ENCODE measurements at regions of chr10 and their contacts with region 1.

Region 1: GRCh38 chr10:13586676-13587355 is at the start of gene PRPF18:
- DNase-seq: peak; percentile 92 to 97 (median 95)
- ATAC-seq: peak; percentile 99
- H3K4me3 ChIP-seq: peak within 1 kb of the TSS; percentile 97
- H3K4me3 Mint-ChIP-seq: peak within 1 kb of the TSS; percentile 100
- H3K27ac ChIP-seq: peak within 1 kb of the TSS; percentile 69 to 73
- H3K27ac Mint-ChIP-seq: peak within 1 kb of the TSS; percentile 99
- H3K4me1 ChIP-seq: peaks cover 16% of the 10 kb centered on the region
- H3K4me1 Mint-ChIP-seq: peaks cover 41% of the 10 kb centered on the region
- H3K27me3 ChIP-seq: peaks cover 3 to 4% of the 10 kb centered on the region in 2 experiments
- H3K27me3 Mint-ChIP-seq: peaks cover 18% of the 10 kb centered on the region
- CTCF ChIP-seq: peak; percentile 96
- total RNA-seq, gene PRPF18: 29.4 to 29.6 TPM

Region 2: DNA sequence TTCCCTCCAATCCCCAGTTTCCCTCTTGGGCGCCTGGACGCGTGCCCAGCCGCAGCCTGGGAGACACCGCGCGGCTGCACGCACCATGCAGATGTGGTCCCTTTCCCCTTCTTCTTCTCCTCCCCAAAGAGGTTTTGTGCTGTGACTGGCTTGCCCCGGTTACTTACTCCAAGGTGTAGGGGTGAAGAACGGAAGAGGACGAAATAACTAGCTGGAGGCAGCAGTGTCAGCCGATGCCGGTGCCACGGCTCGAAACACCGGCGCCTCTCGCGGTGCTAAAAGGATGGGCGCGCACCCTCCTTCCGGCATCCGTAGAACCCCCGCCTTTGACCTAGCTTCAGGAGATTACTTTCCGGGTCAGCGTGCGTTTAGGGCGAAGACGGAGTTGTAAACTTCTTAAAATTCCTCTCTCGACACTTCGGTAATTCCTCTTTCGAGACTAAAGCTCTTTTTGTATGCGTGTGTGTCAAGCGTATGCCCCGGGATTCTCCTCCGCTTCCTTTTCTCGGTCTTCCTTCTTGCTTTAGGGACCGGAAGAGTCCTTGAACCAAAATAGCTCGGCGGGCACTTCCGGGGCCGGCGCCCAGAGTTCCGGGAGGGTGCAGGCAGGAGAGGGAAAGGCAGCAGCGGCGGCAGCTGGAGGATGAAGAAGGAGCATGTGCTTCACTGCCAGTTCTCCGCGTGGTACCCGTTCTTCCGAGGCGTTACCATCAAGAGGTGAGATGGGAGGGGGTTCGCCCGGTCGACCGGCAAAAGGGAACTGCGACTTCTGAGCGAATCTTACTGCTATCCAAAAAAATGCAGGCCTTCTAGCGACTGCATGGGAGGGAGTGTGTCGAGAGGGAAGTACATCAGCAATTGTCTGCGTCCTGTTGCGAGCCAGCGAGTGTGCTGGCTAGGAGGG is 1391.0 kb before region 1 on chr10 and contains the starts of genes CDC123 and NUDT5:
- CTCF ChIA-PET with region 1: no interaction called
- POLR2A ChIA-PET with region 1: no interaction called
- intact Hi-C with region 1: loop called (anchors 5 to 10 kb)
- DNase-seq: peak; percentile 62 to 92 (median 84)
- ATAC-seq: peak; percentile 92
- H3K4me3 ChIP-seq: peak within 1 kb of the TSS; percentile 77 to 82
- H3K4me3 Mint-ChIP-seq: peak within 1 kb of the TSS; percentile 98
- H3K27ac ChIP-seq: peak within 1 kb of the TSS; percentile 82 to 98
- H3K27ac Mint-ChIP-seq: peak within 1 kb of the TSS; percentile 99
- H3K4me1 ChIP-seq: peaks cover 24% of the 10 kb centered on the region
- H3K4me1 Mint-ChIP-seq: peaks cover 62% of the 10 kb centered on the region
- H3K27me3 ChIP-seq: no peaks in the 10 kb centered on the region
- H3K27me3 Mint-ChIP-seq: no peaks in the 10 kb centered on the region
- CTCF ChIP-seq: no peak
- total RNA-seq, gene CDC123: 45.3 to 55.0 TPM
- total RNA-seq, gene NUDT5: 12.1 to 13.6 TPM

Region 3: GRCh38 chr10:13160934-13161856 is 425.6 kb before region 1 on chr10 and contains the start of gene MCM10:
- CTCF ChIA-PET with region 1: no interaction called
- POLR2A ChIA-PET with region 1: no interaction called
- intact Hi-C with region 1: loop called (anchors 1 to 5 kb)
- DNase-seq: peak; percentile 93 to 99 (median 98)
- ATAC-seq: peak; percentile 100
- H3K4me3 ChIP-seq: peak within 1 kb of the TSS; percentile 44 to 49
- H3K4me3 Mint-ChIP-seq: peak within 1 kb of the TSS; percentile 88
- H3K27ac ChIP-seq: peak within 1 kb of the TSS in 1 of 2 experiments; percentile 40
- H3K27ac Mint-ChIP-seq: peak within 1 kb of the TSS; percentile 86
- H3K4me1 ChIP-seq: peaks cover 10% of the 10 kb centered on the region
- H3K4me1 Mint-ChIP-seq: peaks cover 14% of the 10 kb centered on the region
- H3K27me3 ChIP-seq: no peaks in the 10 kb centered on the region
- H3K27me3 Mint-ChIP-seq: no peaks in the 10 kb centered on the region
- CTCF ChIP-seq: peak; percentile 96
- total RNA-seq, gene MCM10: 0.08 to 0.19 TPM

Region 4: DNA sequence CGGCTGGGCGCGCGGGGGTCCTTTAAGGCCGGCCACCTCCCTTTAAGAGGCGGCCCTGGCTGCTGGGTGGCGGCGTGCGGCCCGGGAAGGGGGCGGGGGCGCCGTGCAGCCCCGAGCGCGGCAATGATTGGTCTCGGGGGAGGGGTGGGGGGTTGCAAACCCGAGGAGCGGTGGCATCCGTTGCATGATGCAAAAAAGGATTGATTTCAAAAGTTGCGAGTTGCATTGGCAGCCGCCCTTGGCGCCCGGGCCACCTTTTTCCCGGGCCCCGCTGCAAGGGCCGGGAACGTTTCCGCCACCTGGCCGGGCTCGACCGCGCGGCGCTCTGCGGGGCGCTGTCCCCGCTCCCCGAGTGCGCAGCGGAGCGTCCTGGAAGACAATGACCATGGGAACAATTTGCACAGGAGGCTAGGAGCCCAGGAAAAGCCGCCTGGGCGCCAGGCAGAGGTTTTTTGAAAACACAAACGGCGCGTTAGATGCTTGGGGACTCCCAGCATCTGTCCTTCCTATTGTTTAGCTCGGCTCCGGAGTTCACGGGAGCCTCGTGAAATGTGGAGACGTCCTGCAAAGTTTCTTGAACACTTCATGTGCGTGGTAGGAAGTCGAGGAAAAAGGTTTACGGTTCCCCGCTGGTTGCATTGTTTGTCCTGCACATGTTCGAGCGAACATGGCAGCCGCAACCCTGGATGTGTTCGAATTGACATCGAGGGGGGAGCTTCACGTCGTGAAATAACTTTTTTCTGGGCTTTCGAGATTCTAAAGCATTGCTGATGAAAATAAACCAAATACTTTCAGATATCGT is 238.4 kb before region 1 on chr10 and contains the start of gene SEPHS1:
- CTCF ChIA-PET with region 1: interaction called, 4 read pairs
- POLR2A ChIA-PET with region 1: interaction called, 5 read pairs
- intact Hi-C with region 1: loop called (anchors 1 kb)
- DNase-seq: peak; percentile 51 to 89 (median 79)
- ATAC-seq: peak; percentile 67
- H3K4me3 ChIP-seq: peak within 1 kb of the TSS; percentile 83 to 93
- H3K4me3 Mint-ChIP-seq: peak within 1 kb of the TSS; percentile 96
- H3K27ac ChIP-seq: peak within 1 kb of the TSS; percentile 65 to 82
- H3K27ac Mint-ChIP-seq: peak within 1 kb of the TSS; percentile 94
- H3K4me1 ChIP-seq: peaks cover 48% of the 10 kb centered on the region
- H3K4me1 Mint-ChIP-seq: peaks cover 61% of the 10 kb centered on the region
- H3K27me3 ChIP-seq: no peaks in the 10 kb centered on the region
- H3K27me3 Mint-ChIP-seq: no peaks in the 10 kb centered on the region
- CTCF ChIP-seq: no peak
- total RNA-seq, gene SEPHS1: 16.9 to 19.2 TPM

Region 5: GRCh38 chr10:13659897-13660550 is 73.2 kb after region 1 on chr10:
- CTCF ChIA-PET with region 1: no interaction called
- POLR2A ChIA-PET with region 1: no interaction called
- intact Hi-C with region 1: no loop called
- DNase-seq: peak; percentile 43 to 77 (median 69)
- ATAC-seq: peak; percentile 79
- H3K4me3 ChIP-seq: no peak overlapping the region
- H3K4me3 Mint-ChIP-seq: peak overlapping the region; percentile 4
- H3K27ac ChIP-seq: no peak overlapping the region
- H3K27ac Mint-ChIP-seq: no peak overlapping the region
- H3K4me1 ChIP-seq: peaks cover 16% of the 10 kb centered on the region
- H3K4me1 Mint-ChIP-seq: peaks cover 24% of the 10 kb centered on the region
- H3K27me3 ChIP-seq: no peaks in the 10 kb centered on the region
- H3K27me3 Mint-ChIP-seq: no peaks in the 10 kb centered on the region
- CTCF ChIP-seq: peak; percentile 94

Region 6: DNA sequence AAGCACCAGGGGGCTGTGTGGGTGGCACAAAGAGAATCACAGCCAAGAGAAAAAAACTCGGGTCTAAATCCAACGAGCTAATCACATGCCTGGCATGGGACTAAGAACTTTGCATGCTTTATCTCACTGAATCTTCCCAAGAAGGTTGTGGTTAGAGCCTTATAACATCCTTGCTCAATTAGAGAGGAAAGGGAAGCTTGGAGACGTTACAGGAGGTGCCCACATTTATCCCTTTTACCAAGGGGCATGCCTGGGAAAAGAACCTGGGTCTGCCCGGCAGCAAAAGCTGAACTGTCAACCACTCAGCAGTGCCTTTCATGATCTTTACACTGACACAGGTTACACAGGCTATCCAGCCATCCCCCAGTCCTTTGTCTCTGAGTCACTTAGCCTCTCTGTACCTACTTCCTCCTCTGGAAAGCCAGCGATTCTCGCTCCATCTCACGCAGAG is 190.1 kb after region 1 on chr10:
- CTCF ChIA-PET with region 1: no interaction called
- POLR2A ChIA-PET with region 1: no interaction called
- intact Hi-C with region 1: loop called (anchors 2 to 5 kb)
- DNase-seq: no peak
- ATAC-seq: no peak
- H3K4me3 ChIP-seq: no peak overlapping the region
- H3K4me3 Mint-ChIP-seq: no peak overlapping the region
- H3K27ac ChIP-seq: no peak overlapping the region
- H3K27ac Mint-ChIP-seq: no peak overlapping the region
- H3K4me1 ChIP-seq: peaks cover 4% of the 10 kb centered on the region
- H3K4me1 Mint-ChIP-seq: peaks cover 2% of the 10 kb centered on the region
- H3K27me3 ChIP-seq: peaks cover 0 to 3% of the 10 kb centered on the region in 2 experiments
- H3K27me3 Mint-ChIP-seq: peaks cover 14% of the 10 kb centered on the region
- CTCF ChIP-seq: no peak

Region 7: GRCh38 chr10:14954001-14954770 is 1367.4 kb after region 1 on chr10 and contains the start of gene DCLRE1C:
- CTCF ChIA-PET with region 1: no interaction called
- POLR2A ChIA-PET with region 1: no interaction called
- intact Hi-C with region 1: loop called (anchors 5 kb)
- DNase-seq: peak; percentile 65 to 93 (median 86)
- ATAC-seq: peak; percentile 84
- H3K4me3 ChIP-seq: peak within 1 kb of the TSS; percentile 79 to 95
- H3K4me3 Mint-ChIP-seq: peak within 1 kb of the TSS; percentile 92
- H3K27ac ChIP-seq: peak within 1 kb of the TSS; percentile 64 to 82
- H3K27ac Mint-ChIP-seq: peak within 1 kb of the TSS; percentile 96
- H3K4me1 ChIP-seq: peaks cover 29% of the 10 kb centered on the region
- H3K4me1 Mint-ChIP-seq: peaks cover 52% of the 10 kb centered on the region
- H3K27me3 ChIP-seq: no peaks in the 10 kb centered on the region
- H3K27me3 Mint-ChIP-seq: no peaks in the 10 kb centered on the region
- CTCF ChIP-seq: no peak
- total RNA-seq, gene DCLRE1C: 15.1 to 15.9 TPM